MCF 10A (cell line): ENCODE measurements at regions of chr11 and their contacts with region 1.

Region 1: GRCh38 chr11:106399076-106399511 is 321.6 kb downstream of the AASDHPPT start:
- DNase-seq: peak; percentile 92
- H3K4me3 Mint-ChIP-seq: no peak overlapping the region
- H3K27ac Mint-ChIP-seq: peak overlapping the region; percentile 70
- H3K4me1 Mint-ChIP-seq: peaks cover 21% of the 10 kb centered on the region
- H3K27me3 Mint-ChIP-seq: no peaks in the 10 kb centered on the region
- CTCF ChIP-seq: no peak

Region 2: DNA sequence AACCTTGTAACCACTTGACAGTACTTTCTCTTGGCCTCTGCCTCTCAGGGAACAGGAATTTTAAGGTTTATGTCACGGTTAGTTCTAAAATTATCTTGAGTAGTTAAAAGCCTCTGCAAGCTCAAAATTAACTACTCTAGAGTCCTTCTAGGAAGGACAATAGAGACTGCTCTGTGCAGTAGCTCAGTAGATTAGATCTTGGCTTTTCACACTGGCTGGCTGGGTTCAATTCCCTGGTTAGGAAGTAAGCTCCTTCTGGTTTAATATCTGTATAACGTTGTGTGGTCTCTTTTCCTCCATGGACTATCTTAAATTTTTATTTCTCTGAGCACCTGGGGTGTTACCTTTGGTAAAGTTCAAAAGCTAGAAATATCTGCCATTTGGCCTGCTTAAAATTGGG is 212.5 kb before region 1 on chr11:
- CTCF ChIA-PET with region 1: no interaction called
- POLR2A ChIA-PET with region 1: no interaction called
- intact Hi-C with region 1: no loop called
- DNase-seq: no peak
- H3K4me3 Mint-ChIP-seq: no peak overlapping the region
- H3K27ac Mint-ChIP-seq: no peak overlapping the region
- H3K4me1 Mint-ChIP-seq: no peaks in the 10 kb centered on the region
- H3K27me3 Mint-ChIP-seq: no peaks in the 10 kb centered on the region
- CTCF ChIP-seq: no peak

Region 3: GRCh38 chr11:106242718-106243415 is 156.2 kb before region 1 on chr11:
- CTCF ChIA-PET with region 1: no interaction called
- POLR2A ChIA-PET with region 1: no interaction called
- intact Hi-C with region 1: no loop called
- DNase-seq: no peak
- H3K4me3 Mint-ChIP-seq: no peak overlapping the region
- H3K27ac Mint-ChIP-seq: no peak overlapping the region
- H3K4me1 Mint-ChIP-seq: peaks cover 7% of the 10 kb centered on the region
- H3K27me3 Mint-ChIP-seq: no peaks in the 10 kb centered on the region
- CTCF ChIP-seq: no peak

Region 4: DNA sequence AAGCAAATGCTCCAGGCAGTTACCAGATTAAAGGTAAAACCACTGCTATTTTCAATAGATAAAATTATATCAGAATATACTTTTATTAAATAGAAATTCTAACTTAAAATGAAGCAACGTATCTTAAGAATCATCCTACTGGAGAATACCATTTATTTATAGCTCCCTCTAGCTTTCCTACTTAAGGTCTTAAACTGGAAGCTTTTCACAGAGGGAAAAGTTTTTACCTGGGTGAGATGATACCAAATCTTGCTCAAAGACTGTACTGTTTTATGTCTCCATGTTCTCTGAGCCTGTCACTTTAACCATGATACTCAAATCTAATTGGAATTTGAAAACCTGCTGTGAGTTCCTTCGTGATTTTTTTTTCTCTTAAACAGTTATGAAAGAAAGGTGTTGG is 29.9 kb before region 1 on chr11:
- CTCF ChIA-PET with region 1: interaction called, 3 read pairs
- POLR2A ChIA-PET with region 1: interaction called, 9 read pairs
- intact Hi-C with region 1: loop called (anchors 1 kb)
- DNase-seq: no peak
- H3K4me3 Mint-ChIP-seq: no peak overlapping the region
- H3K27ac Mint-ChIP-seq: peak overlapping the region; percentile 79
- H3K4me1 Mint-ChIP-seq: peaks cover 13% of the 10 kb centered on the region
- H3K27me3 Mint-ChIP-seq: no peaks in the 10 kb centered on the region
- CTCF ChIP-seq: no peak

Region 5: DNA sequence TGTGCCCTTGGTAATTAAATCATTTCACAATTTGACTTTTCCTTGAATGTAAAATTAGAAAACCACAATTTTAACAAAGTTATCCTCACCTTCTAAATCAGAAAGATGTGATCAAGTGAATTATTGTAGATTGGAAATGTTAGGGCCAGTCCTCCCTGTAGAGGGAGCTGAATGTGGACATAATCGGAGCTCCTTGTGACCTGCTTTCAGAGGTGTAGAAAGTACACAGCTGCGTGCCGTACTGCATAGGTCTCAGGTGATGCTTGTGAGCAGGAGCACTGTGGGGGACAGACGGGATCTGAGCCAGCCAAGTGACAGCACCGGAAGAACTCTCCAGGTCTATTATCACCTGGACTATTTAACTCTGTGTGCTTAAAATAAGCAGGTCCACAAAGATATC is 16.4 kb after region 1 on chr11:
- CTCF ChIA-PET with region 1: no interaction called
- POLR2A ChIA-PET with region 1: interaction called, 10 read pairs
- intact Hi-C with region 1: no loop called
- DNase-seq: no peak
- H3K4me3 Mint-ChIP-seq: no peak overlapping the region
- H3K27ac Mint-ChIP-seq: no peak overlapping the region
- H3K4me1 Mint-ChIP-seq: no peaks in the 10 kb centered on the region
- H3K27me3 Mint-ChIP-seq: no peaks in the 10 kb centered on the region
- CTCF ChIP-seq: no peak

Region 6: GRCh38 chr11:106424111-106424510 is 25.0 kb after region 1 on chr11:
- CTCF ChIA-PET with region 1: no interaction called
- POLR2A ChIA-PET with region 1: interaction called, 6 read pairs
- intact Hi-C with region 1: loop called (anchors 2 kb)
- DNase-seq: peak; percentile 72
- H3K4me3 Mint-ChIP-seq: no peak overlapping the region
- H3K27ac Mint-ChIP-seq: peak overlapping the region; percentile 77
- H3K4me1 Mint-ChIP-seq: peaks cover 19% of the 10 kb centered on the region
- H3K27me3 Mint-ChIP-seq: no peaks in the 10 kb centered on the region
- CTCF ChIP-seq: no peak

Region 7: DNA sequence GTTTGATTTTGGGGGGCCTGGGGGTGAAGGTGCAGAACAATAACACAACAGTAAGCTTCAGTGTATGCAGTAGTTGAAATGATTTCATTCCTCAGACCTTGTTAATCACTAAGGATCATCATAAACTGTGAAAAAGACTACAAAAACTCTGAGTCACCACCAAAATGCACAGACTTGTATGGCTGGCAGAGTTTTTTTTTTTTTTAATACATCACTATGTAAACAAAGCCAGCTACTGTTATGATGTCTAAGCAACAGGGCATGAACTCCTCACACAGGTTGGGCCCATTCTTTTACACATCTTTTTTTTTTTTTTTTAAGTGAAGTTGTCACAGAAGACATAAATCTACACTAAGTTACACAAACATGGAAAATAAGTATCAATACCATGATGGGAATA is 307.3 kb after region 1 on chr11:
- CTCF ChIA-PET with region 1: no interaction called
- POLR2A ChIA-PET with region 1: no interaction called
- intact Hi-C with region 1: loop called (anchors 10 kb)
- DNase-seq: peak; percentile 81
- H3K4me3 Mint-ChIP-seq: no peak overlapping the region
- H3K27ac Mint-ChIP-seq: peak overlapping the region; percentile 96
- H3K4me1 Mint-ChIP-seq: peaks cover 6% of the 10 kb centered on the region
- H3K27me3 Mint-ChIP-seq: no peaks in the 10 kb centered on the region
- CTCF ChIP-seq: no peak